H1 (cell line): ENCODE measurements at regions of chr22 and their contacts with region 1.

Region 1: DNA sequence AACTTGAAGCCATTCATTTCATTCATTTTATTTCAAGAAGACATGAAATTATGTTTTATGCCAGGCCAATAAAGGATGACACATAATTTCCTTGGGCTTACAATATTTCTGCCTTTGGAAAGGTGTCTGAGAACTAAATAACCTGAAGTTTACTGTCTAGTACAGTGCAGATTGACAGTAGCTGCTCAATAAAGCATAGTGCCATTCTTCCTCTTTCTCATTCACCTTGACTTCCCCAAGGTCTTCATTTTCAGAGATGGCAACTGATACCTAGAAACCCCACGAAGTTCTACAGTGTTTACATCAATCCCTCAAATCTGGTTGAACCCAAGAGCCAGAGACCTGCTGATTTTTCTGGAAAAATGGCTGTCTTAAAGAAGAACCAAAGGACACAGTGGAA is 144.3 kb upstream of the SYN3 start:
- DNase-seq: no peak
- H3K4me3 ChIP-seq: no peak overlapping the region
- H3K27ac ChIP-seq: no peak overlapping the region
- H3K4me1 ChIP-seq: no peaks in the 10 kb centered on the region
- H3K27me3 ChIP-seq: no peaks in the 10 kb centered on the region; a peak in 2 of 7 replicates
- CTCF ChIP-seq: no peak
- EP300 ChIP-seq: no peak
- POLR2A ChIP-seq: no peak
- RAD21 ChIP-seq: no peak

Region 2: DNA sequence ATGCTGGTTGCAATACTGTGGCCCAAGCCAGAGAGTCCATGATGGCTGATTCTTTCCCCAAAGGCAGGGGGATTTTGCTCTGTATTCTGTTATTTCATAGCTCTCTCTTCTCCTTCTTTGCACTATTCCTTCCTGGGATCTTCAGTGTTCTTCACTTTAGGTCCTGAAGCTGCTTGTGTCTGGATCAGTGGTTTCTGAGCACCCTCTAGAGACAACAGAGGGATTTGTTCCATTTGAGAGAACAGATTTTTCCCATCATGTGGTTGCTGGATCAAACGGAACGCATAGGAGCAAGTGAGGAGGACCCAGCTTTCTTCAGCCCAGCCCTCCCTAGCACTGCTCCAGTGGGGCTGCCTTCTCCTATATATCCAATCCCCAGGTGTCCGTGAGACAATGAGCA is 75.6 kb before region 1 on chr22:
- CTCF ChIA-PET with region 1: interaction called, 13 read pairs
- POLR2A ChIA-PET with region 1: no interaction called
- DNase-seq: peak in 1 of 2 experiments; percentile 13
- H3K4me3 ChIP-seq: no peak overlapping the region
- H3K27ac ChIP-seq: no peak overlapping the region
- H3K4me1 ChIP-seq: no peaks in the 10 kb centered on the region
- H3K27me3 ChIP-seq: peaks cover 0 to 3% (median 0%) of the 10 kb centered on the region in 4 experiments; a peak in 1 of 7 replicates
- CTCF ChIP-seq: peak in 2 of 3 experiments; percentile 72 to 79; a peak in 3 of 4 replicates
- EP300 ChIP-seq: no peak
- POLR2A ChIP-seq: no peak
- RAD21 ChIP-seq: peak; percentile 96 to 97

Region 3: DNA sequence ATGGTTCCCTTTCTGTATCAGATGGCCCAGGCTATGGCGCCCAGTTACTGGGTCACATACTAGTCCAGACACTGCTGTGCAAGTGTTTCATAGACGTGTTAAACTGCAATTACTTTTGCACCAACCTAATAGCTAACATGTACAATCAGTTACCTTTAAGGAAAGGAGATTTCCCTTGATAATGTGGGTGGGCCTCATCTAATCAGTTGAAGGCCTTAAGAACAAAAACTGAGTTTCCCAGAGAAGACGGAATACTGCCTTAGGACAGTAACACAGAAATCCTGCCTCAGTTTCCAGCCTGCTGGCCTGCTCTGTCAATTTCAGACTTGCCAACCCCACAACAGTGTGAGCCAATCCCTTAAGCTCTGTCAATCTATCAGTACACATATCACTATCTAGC is 85.6 kb after region 1 on chr22:
- CTCF ChIA-PET with region 1: no interaction called
- POLR2A ChIA-PET with region 1: no interaction called
- DNase-seq: no peak
- H3K4me3 ChIP-seq: no peak overlapping the region
- H3K27ac ChIP-seq: no peak overlapping the region
- H3K4me1 ChIP-seq: no peaks in the 10 kb centered on the region
- H3K27me3 ChIP-seq: no peaks in the 10 kb centered on the region
- CTCF ChIP-seq: no peak
- EP300 ChIP-seq: no peak
- POLR2A ChIP-seq: no peak
- RAD21 ChIP-seq: no peak